ENCODE measurements at regions of chr4 and their contacts with region 1.

Region 1: GRCh38 chr4:87848622-87849351 is 16.0 kb downstream of the MEPE start:
- DNase-seq: peak in 6 of 9 experiments; percentile 10 to 58 (median 19)
- ATAC-seq: peak; percentile 65
- H3K4me3 ChIP-seq: peak overlapping the region in 1 of 2 experiments; percentile 10
- H3K4me3 Mint-ChIP-seq: peak overlapping the region; percentile 24
- H3K27ac ChIP-seq: no peak overlapping the region
- H3K27ac Mint-ChIP-seq: no peak overlapping the region
- H3K4me1 ChIP-seq: no peaks in the 10 kb centered on the region
- H3K4me1 Mint-ChIP-seq: peaks cover 10% of the 10 kb centered on the region
- H3K27me3 ChIP-seq: no peaks in the 10 kb centered on the region
- H3K27me3 Mint-ChIP-seq: peaks cover 18% of the 10 kb centered on the region
- CTCF ChIP-seq: peak; percentile 34

Region 2: GRCh38 chr4:87353592-87353991 is 495.2 kb before region 1 on chr4:
- CTCF ChIA-PET with region 1: no interaction called
- POLR2A ChIA-PET with region 1: no interaction called
- intact Hi-C with region 1: loop called in 1 of 2 experiments (anchors 5 kb)
- DNase-seq: peak in 7 of 9 experiments; percentile 4 to 61 (median 53)
- ATAC-seq: no peak
- H3K4me3 ChIP-seq: no peak overlapping the region
- H3K4me3 Mint-ChIP-seq: no peak overlapping the region
- H3K27ac ChIP-seq: no peak overlapping the region
- H3K27ac Mint-ChIP-seq: no peak overlapping the region
- H3K4me1 ChIP-seq: no peaks in the 10 kb centered on the region
- H3K4me1 Mint-ChIP-seq: no peaks in the 10 kb centered on the region
- H3K27me3 ChIP-seq: no peaks in the 10 kb centered on the region
- H3K27me3 Mint-ChIP-seq: no peaks in the 10 kb centered on the region
- CTCF ChIP-seq: peak; percentile 62

Region 3: GRCh38 chr4:87375719-87376291 is 473.0 kb before region 1 on chr4:
- CTCF ChIA-PET with region 1: no interaction called
- POLR2A ChIA-PET with region 1: no interaction called
- intact Hi-C with region 1: loop called in 1 of 2 experiments (anchors 10 kb)
- DNase-seq: peak in 2 of 9 experiments; percentile 51 to 66
- ATAC-seq: peak; percentile 63
- H3K4me3 ChIP-seq: no peak overlapping the region
- H3K4me3 Mint-ChIP-seq: no peak overlapping the region
- H3K27ac ChIP-seq: no peak overlapping the region
- H3K27ac Mint-ChIP-seq: no peak overlapping the region
- H3K4me1 ChIP-seq: no peaks in the 10 kb centered on the region
- H3K4me1 Mint-ChIP-seq: peaks cover 5% of the 10 kb centered on the region
- H3K27me3 ChIP-seq: no peaks in the 10 kb centered on the region
- H3K27me3 Mint-ChIP-seq: no peaks in the 10 kb centered on the region
- CTCF ChIP-seq: peak; percentile 76

Region 4: DNA sequence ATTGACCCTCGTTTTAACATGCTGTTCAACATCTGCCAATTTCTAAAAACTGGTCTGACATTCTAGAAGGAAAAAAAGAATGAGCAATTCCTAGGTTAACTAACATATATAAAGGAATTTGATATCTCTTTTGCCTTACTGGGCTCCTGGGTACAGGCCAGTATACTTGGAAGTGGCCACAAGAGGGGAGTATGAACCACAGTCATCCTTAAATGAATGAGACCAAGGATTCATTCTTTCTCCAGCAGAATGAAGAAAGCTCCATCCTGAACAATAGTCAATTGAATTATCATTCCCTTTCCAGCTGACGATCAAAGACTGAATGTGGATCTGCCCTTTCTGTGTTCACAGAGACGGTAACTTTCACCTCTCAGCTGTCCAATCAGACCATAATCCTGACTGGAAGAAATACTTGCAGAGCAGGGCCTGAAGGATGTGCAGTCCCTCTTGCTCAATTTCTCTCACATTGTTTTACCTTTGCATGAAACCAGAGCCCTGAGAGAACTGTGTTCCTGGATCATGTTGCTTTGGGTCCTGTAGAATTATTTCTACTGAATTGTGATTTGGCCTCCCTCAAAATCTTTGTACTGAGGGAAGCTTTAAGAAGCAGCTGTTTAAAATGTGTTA is 304.8 kb before region 1 on chr4:
- CTCF ChIA-PET with region 1: no interaction called
- POLR2A ChIA-PET with region 1: no interaction called
- intact Hi-C with region 1: loop called in 1 of 2 experiments (anchors 10 kb)
- DNase-seq: peak in 2 of 9 experiments; percentile 3 to 11
- ATAC-seq: no peak
- H3K4me3 ChIP-seq: no peak overlapping the region
- H3K4me3 Mint-ChIP-seq: no peak overlapping the region
- H3K27ac ChIP-seq: no peak overlapping the region
- H3K27ac Mint-ChIP-seq: no peak overlapping the region
- H3K4me1 ChIP-seq: no peaks in the 10 kb centered on the region
- H3K4me1 Mint-ChIP-seq: no peaks in the 10 kb centered on the region
- H3K27me3 ChIP-seq: no peaks in the 10 kb centered on the region
- H3K27me3 Mint-ChIP-seq: no peaks in the 10 kb centered on the region
- CTCF ChIP-seq: no peak

Region 5: GRCh38 chr4:87679449-87680169 is 169.2 kb before region 1 on chr4:
- CTCF ChIA-PET with region 1: no interaction called
- POLR2A ChIA-PET with region 1: no interaction called
- intact Hi-C with region 1: loop called in 1 of 2 experiments (anchors 5 kb)
- DNase-seq: peak in 7 of 9 experiments; percentile 9 to 57 (median 22)
- ATAC-seq: no peak
- H3K4me3 ChIP-seq: no peak overlapping the region
- H3K4me3 Mint-ChIP-seq: no peak overlapping the region
- H3K27ac ChIP-seq: no peak overlapping the region
- H3K27ac Mint-ChIP-seq: no peak overlapping the region
- H3K4me1 ChIP-seq: no peaks in the 10 kb centered on the region
- H3K4me1 Mint-ChIP-seq: no peaks in the 10 kb centered on the region
- H3K27me3 ChIP-seq: no peaks in the 10 kb centered on the region
- H3K27me3 Mint-ChIP-seq: peaks cover 2% of the 10 kb centered on the region
- CTCF ChIP-seq: peak; percentile 83

Region 6: DNA sequence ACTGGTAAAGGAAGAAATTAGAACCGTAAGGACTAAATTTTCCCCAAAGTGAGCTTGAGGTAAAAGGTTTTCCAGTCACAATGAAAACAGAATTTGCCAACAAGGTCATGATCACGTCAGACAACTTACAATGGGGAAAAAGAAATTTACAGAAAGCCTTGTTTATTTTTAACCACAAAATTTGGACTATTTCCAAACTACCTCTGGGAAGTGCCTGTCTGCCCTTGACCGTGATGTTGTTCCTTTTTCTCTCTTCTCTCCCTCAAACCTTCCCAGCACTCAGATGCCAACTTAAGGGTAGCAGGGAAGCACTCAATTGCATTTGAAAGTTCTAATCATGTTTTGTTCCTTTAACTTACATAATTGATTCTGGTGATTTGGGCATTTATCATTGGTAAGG is 16.5 kb after region 1 on chr4:
- CTCF ChIA-PET with region 1: interaction called, 10 read pairs
- POLR2A ChIA-PET with region 1: no interaction called
- intact Hi-C with region 1: no loop called
- DNase-seq: no peak
- ATAC-seq: no peak
- H3K4me3 ChIP-seq: no peak overlapping the region
- H3K4me3 Mint-ChIP-seq: no peak overlapping the region
- H3K27ac ChIP-seq: no peak overlapping the region
- H3K27ac Mint-ChIP-seq: no peak overlapping the region
- H3K4me1 ChIP-seq: no peaks in the 10 kb centered on the region
- H3K4me1 Mint-ChIP-seq: no peaks in the 10 kb centered on the region
- H3K27me3 ChIP-seq: no peaks in the 10 kb centered on the region
- H3K27me3 Mint-ChIP-seq: peaks cover 6% of the 10 kb centered on the region
- CTCF ChIP-seq: no peak

Region 7: GRCh38 chr4:87973283-87974169 is 124.7 kb after region 1 on chr4:
- CTCF ChIA-PET with region 1: no interaction called
- POLR2A ChIA-PET with region 1: no interaction called
- intact Hi-C with region 1: loop called in 1 of 2 experiments (anchors 10 kb)
- DNase-seq: peak in 5 of 9 experiments; percentile 16 to 53 (median 42)
- ATAC-seq: peak; percentile 74
- H3K4me3 ChIP-seq: no peak overlapping the region
- H3K4me3 Mint-ChIP-seq: no peak overlapping the region
- H3K27ac ChIP-seq: no peak overlapping the region
- H3K27ac Mint-ChIP-seq: no peak overlapping the region
- H3K4me1 ChIP-seq: peaks cover 6% of the 10 kb centered on the region
- H3K4me1 Mint-ChIP-seq: peaks cover 12% of the 10 kb centered on the region
- H3K27me3 ChIP-seq: peaks cover 0 to 4% of the 10 kb centered on the region in 2 experiments
- H3K27me3 Mint-ChIP-seq: peaks cover 27% of the 10 kb centered on the region
- CTCF ChIP-seq: peak; percentile 66

Region 8: DNA sequence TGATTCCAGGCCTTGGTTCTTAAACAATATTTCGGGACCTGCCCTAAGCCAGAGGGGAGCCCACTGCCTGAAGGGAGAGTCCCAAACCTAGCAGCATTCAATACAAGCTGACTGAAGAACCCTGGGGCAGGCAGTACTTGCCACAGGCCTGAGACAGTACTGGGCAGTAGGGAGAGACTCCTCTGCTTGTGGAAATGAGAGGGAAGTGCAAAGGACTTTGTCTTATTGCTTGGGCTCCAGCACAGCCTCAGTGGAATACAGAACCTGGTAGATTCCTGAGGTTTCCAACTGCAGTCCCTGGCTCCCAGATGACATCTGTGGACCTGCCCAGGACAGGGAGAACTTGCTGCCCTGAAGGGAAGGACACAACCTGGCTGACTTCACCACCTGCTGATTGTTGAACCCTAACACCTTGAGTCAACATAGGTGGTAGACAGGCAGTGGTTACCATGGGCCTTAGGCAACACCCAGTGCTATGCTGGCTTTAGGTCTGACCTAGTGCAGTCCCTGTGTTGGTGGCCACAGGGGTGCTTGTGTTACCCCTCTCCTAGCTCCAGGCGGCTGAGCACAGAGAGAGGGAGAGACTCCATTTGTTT is 329.9 kb after region 1 on chr4:
- CTCF ChIA-PET with region 1: no interaction called
- POLR2A ChIA-PET with region 1: no interaction called
- intact Hi-C with region 1: no loop called
- DNase-seq: no peak
- ATAC-seq: no peak
- H3K4me3 ChIP-seq: no peak overlapping the region
- H3K4me3 Mint-ChIP-seq: no peak overlapping the region
- H3K27ac ChIP-seq: no peak overlapping the region
- H3K27ac Mint-ChIP-seq: no peak overlapping the region
- H3K4me1 ChIP-seq: no peaks in the 10 kb centered on the region
- H3K4me1 Mint-ChIP-seq: no peaks in the 10 kb centered on the region
- H3K27me3 ChIP-seq: no peaks in the 10 kb centered on the region
- H3K27me3 Mint-ChIP-seq: peaks cover 6% of the 10 kb centered on the region
- CTCF ChIP-seq: no peak

Measured in CD8-positive, alpha-beta T cell (primary cell).